Colonic mucosa (tissue), 4 donors: ENCODE measurements at regions of chrX and their contacts with region 1.

Region 1: GRCh38 chrX:109635176-109635575 is 10.2 kb upstream of the KCNE5 start:
- DNase-seq: no peak
- H3K4me3 ChIP-seq: no peak overlapping the region
- H3K27ac ChIP-seq: no peak overlapping the region
- H3K4me1 ChIP-seq: no peaks in the 10 kb centered on the region
- H3K27me3 ChIP-seq: peaks cover 4% of the 10 kb centered on the region
- CTCF ChIP-seq: peak; percentile 17

Region 2: GRCh38 chrX:109485470-109486340 is 149.5 kb before region 1 on chrX:
- intact Hi-C with region 1: loop called (anchors 2 kb)
- DNase-seq: peak; percentile 64
- H3K4me3 ChIP-seq: no peak overlapping the region
- H3K27ac ChIP-seq: no peak overlapping the region
- H3K4me1 ChIP-seq: no peaks in the 10 kb centered on the region
- H3K27me3 ChIP-seq: no peaks in the 10 kb centered on the region
- CTCF ChIP-seq: peak; percentile 96

Region 3: DNA sequence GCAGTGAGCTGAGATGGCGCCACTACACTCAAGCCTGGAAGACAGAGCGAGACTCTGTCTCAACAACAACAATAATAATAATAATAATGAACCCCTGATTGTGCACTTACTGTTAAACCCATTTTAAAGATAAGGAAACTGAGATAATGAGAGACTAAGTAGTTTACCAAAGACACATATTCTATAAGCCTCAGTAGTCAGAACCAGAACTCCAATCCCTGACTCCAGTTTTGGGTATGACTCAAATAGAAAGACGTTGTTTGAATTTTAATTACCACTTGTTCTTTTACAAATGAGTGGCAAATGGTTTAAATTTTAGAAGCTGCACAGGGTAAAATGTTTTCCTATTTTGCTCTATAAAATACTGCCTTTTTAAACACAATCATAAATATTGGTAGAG is 60.5 kb after region 1 on chrX:
- intact Hi-C with region 1: no loop called
- DNase-seq: no peak
- H3K4me3 ChIP-seq: no peak overlapping the region
- H3K27ac ChIP-seq: no peak overlapping the region
- H3K4me1 ChIP-seq: no peaks in the 10 kb centered on the region
- H3K27me3 ChIP-seq: no peaks in the 10 kb centered on the region
- CTCF ChIP-seq: no peak